ENCODE measurements at regions of chr16 and their contacts with region 1.

Region 1: GRCh38 chr16:47141773-47142485 is 1.8 kb downstream of the NETO2 start:
- DNase-seq: peak; percentile 78 to 94
- H3K4me3 ChIP-seq: peak overlapping the region; percentile 50 to 72 (median 57)
- H3K27ac ChIP-seq: no peak overlapping the region
- H3K4me1 ChIP-seq: peaks cover 18 to 30% (median 27%) of the 10 kb centered on the region in 4 donors
- H3K27me3 ChIP-seq: peaks cover 0 to 47% (median 7%) of the 10 kb centered on the region in 3 donors
- CTCF ChIP-seq: peak in 5 of 7 experiments; percentile 66 to 78 (median 75)
- EP300 ChIP-seq: no peak
- POLR2A ChIP-seq: no peak

Region 2: DNA sequence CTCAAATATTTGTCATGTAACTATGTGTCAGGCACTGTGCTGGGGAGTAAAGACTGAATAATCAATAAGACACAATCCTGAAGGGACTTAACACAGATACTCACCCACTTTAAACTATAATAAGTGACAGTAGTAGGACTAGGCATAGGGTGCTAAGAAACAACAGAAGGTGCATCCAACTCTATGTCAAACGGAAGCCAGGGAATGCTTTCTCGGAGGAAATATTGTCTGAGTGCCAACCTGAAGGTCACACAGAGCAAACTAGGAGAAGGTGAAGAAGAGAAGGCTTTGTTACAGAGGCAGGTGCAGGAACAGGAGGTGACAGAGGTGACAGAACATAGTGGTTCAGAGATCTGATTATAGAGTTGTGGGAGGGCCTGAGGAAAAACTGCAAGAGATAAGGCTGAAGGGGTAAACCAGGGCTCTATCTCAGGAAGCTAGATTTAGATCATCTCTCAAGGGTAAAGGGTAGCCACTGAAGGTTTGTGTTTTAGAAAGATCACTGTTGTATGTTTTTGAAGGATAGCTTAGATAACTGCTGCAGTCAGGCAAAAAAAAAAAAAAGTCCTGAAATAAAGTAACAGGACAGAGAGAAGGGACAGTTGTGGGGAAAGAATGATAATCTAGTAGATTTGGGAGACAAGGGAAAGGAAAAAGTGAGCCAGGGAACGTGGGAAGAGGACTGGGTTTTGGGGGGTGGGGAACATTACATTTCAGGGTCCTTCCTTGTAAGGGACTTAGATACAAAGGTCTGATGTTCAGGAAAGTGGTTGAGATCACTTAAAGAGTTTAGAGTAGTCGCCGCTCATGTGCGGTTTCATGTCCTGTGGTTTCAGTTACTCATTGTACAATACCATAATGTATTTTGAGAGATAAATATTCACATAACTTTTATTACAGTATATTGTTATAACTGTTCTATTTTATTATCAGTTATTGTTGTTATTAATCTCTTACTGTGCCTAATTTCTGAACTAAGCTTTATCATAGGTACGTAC is 87.4 kb after region 1 on chr16:
- intact Hi-C with region 1: no loop called
- DNase-seq: no peak
- H3K4me3 ChIP-seq: no peak overlapping the region
- H3K27ac ChIP-seq: no peak overlapping the region
- H3K4me1 ChIP-seq: no peaks in the 10 kb centered on the region
- H3K27me3 ChIP-seq: no peaks in the 10 kb centered on the region
- CTCF ChIP-seq: no peak
- EP300 ChIP-seq: no peak
- POLR2A ChIP-seq: no peak

Region 3: DNA sequence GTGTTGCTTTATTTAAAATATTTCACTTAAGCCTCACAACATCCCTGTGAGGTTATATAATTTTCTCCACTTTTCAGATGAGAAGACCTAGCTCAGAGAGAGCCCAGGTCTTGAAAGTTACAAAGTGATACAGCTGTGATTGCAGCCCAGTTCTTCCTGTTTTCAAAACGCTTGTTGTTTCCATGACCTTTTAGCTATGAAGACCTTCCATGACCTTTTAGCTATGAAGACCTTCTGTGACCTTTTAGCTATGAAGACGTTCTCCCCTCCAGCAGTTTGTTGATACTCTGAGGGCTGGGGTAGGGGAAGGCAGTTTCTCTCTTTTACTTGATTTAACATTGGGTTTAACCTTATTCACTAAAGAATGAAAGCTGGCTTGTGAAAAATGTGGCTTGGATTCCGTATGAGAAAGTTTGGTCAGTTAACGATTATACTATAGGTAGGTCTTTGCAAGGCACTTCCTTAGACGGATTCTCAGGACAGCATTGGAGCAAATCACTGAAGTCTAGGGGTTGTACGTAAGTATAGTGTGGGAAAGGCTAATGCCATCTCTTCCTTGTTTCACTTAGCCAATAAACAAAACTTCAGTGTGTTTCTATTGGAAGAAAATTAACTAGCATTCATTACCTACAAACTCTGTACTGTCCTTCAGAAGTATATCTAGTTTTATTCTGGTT is 339.9 kb after region 1 on chr16:
- intact Hi-C with region 1: no loop called
- DNase-seq: no peak
- H3K4me3 ChIP-seq: no peak overlapping the region
- H3K27ac ChIP-seq: no peak overlapping the region
- H3K4me1 ChIP-seq: peaks cover 0 to 21% (median 6%) of the 10 kb centered on the region in 4 donors
- H3K27me3 ChIP-seq: no peaks in the 10 kb centered on the region
- CTCF ChIP-seq: no peak
- EP300 ChIP-seq: no peak
- POLR2A ChIP-seq: no peak

Region 4: GRCh38 chr16:48054881-48055601 is 913.1 kb after region 1 on chr16:
- intact Hi-C with region 1: loop called (anchors 10 kb)
- DNase-seq: peak; percentile 47 to 82
- H3K4me3 ChIP-seq: no peak overlapping the region
- H3K27ac ChIP-seq: no peak overlapping the region
- H3K4me1 ChIP-seq: peaks cover 0 to 14% (median 5%) of the 10 kb centered on the region in 4 donors
- H3K27me3 ChIP-seq: peaks cover 0 to 41% (median 0%) of the 10 kb centered on the region in 3 donors
- CTCF ChIP-seq: peak in 5 of 7 experiments; percentile 40 to 63 (median 57)
- EP300 ChIP-seq: no peak
- POLR2A ChIP-seq: no peak

Region 5: GRCh38 chr16:48164907-48165726 is 1023.2 kb after region 1 on chr16:
- intact Hi-C with region 1: loop called (anchors 5 kb)
- DNase-seq: peak; percentile 80 to 87
- H3K4me3 ChIP-seq: no peak overlapping the region
- H3K27ac ChIP-seq: peak overlapping the region in 3 of 5 donors; percentile 18 to 52 (median 46)
- H3K4me1 ChIP-seq: peaks cover 0 to 18% (median 11%) of the 10 kb centered on the region in 4 donors
- H3K27me3 ChIP-seq: no peaks in the 10 kb centered on the region
- CTCF ChIP-seq: peak in 5 of 7 experiments; percentile 71 to 90 (median 78)
- EP300 ChIP-seq: no peak
- POLR2A ChIP-seq: no peak